ENCODE measurements at regions of chr11 and their contacts with region 1.

Region 1: GRCh38 chr11:3380706-3381545 is 2.0 kb upstream of the ZNF195 start:
- DNase-seq: no peak
- H3K27ac ChIP-seq: no peak overlapping the region
- CTCF ChIP-seq: no peak

Region 2: GRCh38 chr11:3370311-3370870 is 10.5 kb before region 1 on chr11:
- CTCF ChIA-PET with region 1: no interaction called
- POLR2A ChIA-PET with region 1: no interaction called
- DNase-seq: no peak
- H3K27ac ChIP-seq: no peak overlapping the region
- CTCF ChIP-seq: no peak

Region 3: GRCh38 chr11:3412837-3413236 is 31.9 kb after region 1 on chr11:
- CTCF ChIA-PET with region 1: interaction called, 10 read pairs
- POLR2A ChIA-PET with region 1: no interaction called
- DNase-seq: no peak
- H3K27ac ChIP-seq: no peak overlapping the region
- CTCF ChIP-seq: no peak